Dorsolateral prefrontal cortex (tissue), 120 donors: ENCODE measurements at regions of chr1 and their contacts with region 1.

Region 1: GRCh38 chr1:151443846-151444782 is 15.2 kb downstream of the POGZ start:
- DNase-seq: peak in 4 of 10 donors; percentile 22 to 59 (median 50)
- H3K4me3 ChIP-seq: peak overlapping the region in 1 of 59 donors; percentile 5
- H3K27ac ChIP-seq: peak overlapping the region in 8 of 59 donors; percentile 3 to 40 (median 27)
- H3K27me3 ChIP-seq: no peaks in the 10 kb centered on the region
- CTCF ChIP-seq: peak; percentile 40 to 84 (median 72)

Region 2: DNA sequence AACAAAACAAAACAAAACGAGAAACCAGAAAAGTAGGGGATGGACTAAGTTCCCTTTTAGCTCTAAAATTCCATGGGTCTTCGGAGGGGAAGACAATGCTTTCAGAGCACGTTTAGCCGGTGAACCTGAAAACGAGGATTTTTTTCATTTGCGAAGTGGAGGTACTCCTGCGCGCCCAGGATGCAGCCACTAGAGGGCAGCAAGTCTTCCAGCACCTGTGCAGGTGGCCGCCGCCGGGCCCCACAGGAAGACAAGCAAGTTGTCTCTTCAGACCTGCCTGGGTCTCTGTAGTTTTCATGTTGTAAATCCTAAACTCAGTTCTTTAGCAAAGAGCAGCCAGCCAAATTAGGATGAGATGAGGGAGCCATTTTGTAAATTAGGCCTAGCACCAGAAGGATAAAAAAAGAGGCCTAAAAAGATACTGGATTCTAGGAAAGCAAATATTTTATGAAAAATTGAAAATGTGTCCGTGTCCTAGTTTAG is 150.1 kb after region 1 on chr1:
- intact Hi-C with region 1: loop called in 1 of 2 experiments (anchors 5 kb)
- DNase-seq: peak; percentile 57 to 87 (median 74)
- H3K4me3 ChIP-seq: peak overlapping the region in 15 of 59 donors; percentile 3 to 43 (median 12)
- H3K27ac ChIP-seq: no peak overlapping the region
- H3K27me3 ChIP-seq: no peaks in the 10 kb centered on the region
- CTCF ChIP-seq: peak; percentile 70 to 93 (median 85)

Region 3: DNA sequence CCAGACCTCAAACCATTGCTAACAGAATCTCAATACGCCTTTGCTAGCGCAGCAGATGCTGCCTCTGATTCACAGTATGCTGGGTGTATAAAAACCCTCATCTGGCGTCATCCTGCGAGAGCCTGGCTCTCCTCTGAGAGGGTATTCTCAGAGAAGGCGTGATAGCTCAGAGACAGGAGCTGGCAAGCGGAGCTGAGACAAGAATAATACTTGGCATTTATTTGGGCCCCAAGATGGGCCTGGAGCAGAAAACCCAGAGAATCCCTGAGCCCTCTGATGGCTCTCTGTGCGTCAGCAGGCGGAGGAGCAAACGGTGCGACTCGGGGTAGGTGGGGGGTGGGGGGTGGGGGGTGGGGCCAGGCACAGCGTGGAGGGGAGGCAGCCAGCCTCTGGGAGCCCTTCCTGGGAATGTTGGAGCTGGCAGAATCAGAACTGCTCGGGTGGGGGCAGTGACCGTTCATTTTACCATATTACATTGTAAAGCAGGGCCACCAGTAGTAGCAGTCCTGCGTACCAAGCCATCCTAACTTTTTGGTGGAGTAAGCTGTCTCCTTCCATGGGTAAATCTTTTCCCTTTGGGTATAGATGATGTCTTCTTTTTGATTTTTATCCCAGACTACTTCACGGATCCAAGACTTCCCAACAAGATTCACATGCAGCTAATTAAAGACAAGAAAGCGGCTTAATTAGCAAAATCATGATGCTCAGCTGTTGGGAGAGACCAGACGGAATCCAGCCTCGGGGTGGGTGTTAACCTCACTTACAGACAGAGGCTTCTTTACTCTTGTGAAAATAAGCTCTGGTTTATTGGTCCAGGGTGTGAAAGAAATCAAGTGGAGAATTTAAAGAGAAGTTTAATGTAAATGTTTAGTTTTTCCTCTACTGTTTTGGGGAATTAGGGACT is 284.3 kb after region 1 on chr1:
- intact Hi-C with region 1: loop called in 1 of 2 experiments (anchors 5 kb)
- DNase-seq: peak in 9 of 10 donors; percentile 52 to 86 (median 76)
- H3K4me3 ChIP-seq: peak overlapping the region in 53 of 59 donors; percentile 2 to 60 (median 38)
- H3K27ac ChIP-seq: peak overlapping the region in 56 of 59 donors; percentile 12 to 90 (median 70)
- H3K27me3 ChIP-seq: peaks cover 0 to 9% (median 0%) of the 10 kb centered on the region in 45 donors
- CTCF ChIP-seq: peak in 2 of 56 donors; percentile 9 to 11